ENCODE measurements at regions of chr20 and their contacts with region 1.

Region 1: GRCh38 chr20:50561379-50562078 is 51.3 kb downstream of the PTPN1 start:
- DNase-seq: peak; percentile 27
- H3K4me3 Mint-ChIP-seq: peak overlapping the region; percentile 81
- H3K27ac Mint-ChIP-seq: peak overlapping the region; percentile 98
- H3K4me1 Mint-ChIP-seq: peaks cover 60% of the 10 kb centered on the region
- H3K27me3 Mint-ChIP-seq: no peaks in the 10 kb centered on the region

Region 2: DNA sequence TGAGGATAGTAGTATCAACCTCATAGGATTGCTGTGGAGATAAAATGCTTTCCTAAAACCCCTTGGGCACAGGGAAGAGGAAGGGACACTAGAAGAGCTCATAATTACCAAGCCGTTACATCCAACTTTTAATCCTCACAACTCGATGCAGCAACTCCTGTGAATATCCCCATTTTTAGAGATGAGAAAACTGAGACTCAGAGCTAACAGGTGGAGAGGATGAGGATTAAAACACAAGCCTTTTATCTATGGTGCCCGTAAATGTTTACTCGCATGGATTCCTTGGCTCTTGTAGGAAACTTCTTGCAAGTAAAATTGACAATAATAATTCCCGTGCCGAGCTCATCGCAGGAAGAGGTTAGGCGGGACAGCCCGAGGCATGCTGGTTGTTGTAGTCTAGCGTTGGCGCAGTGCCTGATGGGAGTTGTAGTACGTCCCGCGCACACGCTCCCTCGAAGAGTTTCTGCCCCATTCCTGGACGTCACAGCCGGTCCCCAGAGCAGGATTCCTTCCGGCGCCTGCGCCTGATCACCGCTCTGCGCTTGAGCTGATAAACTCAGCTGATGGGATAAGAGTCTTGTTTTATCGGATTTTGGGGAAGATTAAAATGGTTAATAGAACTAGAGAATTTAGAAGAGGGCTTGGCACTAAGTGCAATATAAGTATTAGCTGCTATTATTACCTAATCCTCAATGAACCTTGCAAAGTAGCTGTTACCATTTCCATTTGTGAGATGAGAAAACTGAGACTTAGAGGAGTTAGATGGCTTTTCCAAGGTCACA is 445.7 kb before region 1 on chr20:
- intact Hi-C with region 1: loop called (anchors 5 kb)
- DNase-seq: peak; percentile 86
- H3K4me3 Mint-ChIP-seq: peak overlapping the region; percentile 85
- H3K27ac Mint-ChIP-seq: peak overlapping the region; percentile 95
- H3K4me1 Mint-ChIP-seq: peaks cover 43% of the 10 kb centered on the region
- H3K27me3 Mint-ChIP-seq: no peaks in the 10 kb centered on the region

Region 3: GRCh38 chr20:50409495-50409894 is 152.0 kb before region 1 on chr20:
- intact Hi-C with region 1: no loop called
- DNase-seq: no peak
- H3K4me3 Mint-ChIP-seq: no peak overlapping the region
- H3K27ac Mint-ChIP-seq: no peak overlapping the region
- H3K4me1 Mint-ChIP-seq: no peaks in the 10 kb centered on the region
- H3K27me3 Mint-ChIP-seq: peaks cover 22% of the 10 kb centered on the region

Region 4: GRCh38 chr20:50484276-50484976 is 77.1 kb before region 1 on chr20:
- intact Hi-C with region 1: loop called (anchors 2 kb)
- DNase-seq: no peak
- H3K4me3 Mint-ChIP-seq: peak overlapping the region; percentile 93
- H3K27ac Mint-ChIP-seq: peak overlapping the region; percentile 96
- H3K4me1 Mint-ChIP-seq: peaks cover 58% of the 10 kb centered on the region
- H3K27me3 Mint-ChIP-seq: no peaks in the 10 kb centered on the region

Region 5: GRCh38 chr20:50509935-50510705 is 51.4 kb before region 1 on chr20 and contains the start of gene PTPN1:
- intact Hi-C with region 1: loop called (anchors 2 kb)
- DNase-seq: peak; percentile 99
- H3K4me3 Mint-ChIP-seq: peak within 1 kb of the TSS; percentile 93
- H3K27ac Mint-ChIP-seq: peak within 1 kb of the TSS; percentile 86
- H3K4me1 Mint-ChIP-seq: peaks cover 43% of the 10 kb centered on the region
- H3K27me3 Mint-ChIP-seq: no peaks in the 10 kb centered on the region
- total RNA-seq, gene PTPN1: 93.2 and 94.6 TPM in 2 replicates

Region 6: GRCh38 chr20:50516180-50516934 is 45.2 kb before region 1 on chr20:
- intact Hi-C with region 1: loop called (anchors 1 kb)
- DNase-seq: no peak
- H3K4me3 Mint-ChIP-seq: peak overlapping the region; percentile 62
- H3K27ac Mint-ChIP-seq: peak overlapping the region; percentile 95
- H3K4me1 Mint-ChIP-seq: peaks cover 86% of the 10 kb centered on the region
- H3K27me3 Mint-ChIP-seq: no peaks in the 10 kb centered on the region

Region 7: GRCh38 chr20:50546729-50547314 is 14.7 kb before region 1 on chr20:
- intact Hi-C with region 1: loop called (anchors 1 kb)
- DNase-seq: no peak
- H3K4me3 Mint-ChIP-seq: peak overlapping the region; percentile 72
- H3K27ac Mint-ChIP-seq: peak overlapping the region; percentile 86
- H3K4me1 Mint-ChIP-seq: peaks cover 53% of the 10 kb centered on the region
- H3K27me3 Mint-ChIP-seq: no peaks in the 10 kb centered on the region